ENCODE measurements at regions of chr2 and their contacts with region 1.

Region 1: GRCh38 chr2:128321784-128322714 is 3.4 kb upstream of the HS6ST1 start:
- DNase-seq: peak; percentile 76 to 91 (median 87)
- H3K4me3 ChIP-seq: peak overlapping the region; percentile 42 to 81 (median 66)
- H3K27ac ChIP-seq: peak overlapping the region in 54 of 59 donors; percentile 9 to 92 (median 74)
- H3K27me3 ChIP-seq: no peaks in the 10 kb centered on the region
- CTCF ChIP-seq: peak; percentile 74 to 100 (median 97)

Region 2: DNA sequence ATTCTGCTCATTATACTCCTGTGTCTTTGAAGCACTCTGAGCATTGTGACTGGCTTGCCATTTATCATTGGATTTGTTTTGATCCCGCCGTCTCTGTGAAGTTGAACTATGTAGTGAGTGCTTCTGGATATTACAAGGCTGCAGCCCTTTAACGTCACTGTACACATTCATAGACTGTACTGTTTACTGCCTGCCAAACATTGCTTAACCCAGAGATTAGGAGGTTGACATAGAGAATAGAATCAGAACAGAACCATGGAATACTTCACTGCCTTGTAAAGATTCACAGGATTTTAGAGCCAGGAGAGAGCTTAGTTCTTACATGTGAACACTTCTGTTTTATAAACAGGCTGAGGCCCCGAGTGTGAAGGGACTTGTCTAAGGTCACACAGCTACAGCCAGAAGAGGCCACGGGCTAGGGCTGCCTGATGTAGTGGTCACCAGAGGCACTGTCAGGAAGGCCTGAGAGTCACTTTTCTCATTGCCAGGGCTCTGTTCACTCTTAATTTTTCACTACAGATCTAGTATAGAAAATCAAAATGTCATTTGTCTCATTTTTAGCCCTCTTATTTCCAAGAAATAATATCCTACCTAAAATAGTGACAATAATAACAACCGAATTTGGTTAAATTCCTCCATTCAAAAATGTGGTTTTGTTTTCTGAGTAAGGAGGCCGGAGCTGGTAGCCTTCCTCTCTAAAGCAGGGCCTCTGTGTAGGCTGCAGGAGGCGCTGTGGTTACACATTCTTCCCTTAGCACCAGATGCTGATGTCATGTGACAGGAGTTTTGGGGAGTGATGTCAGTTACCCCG is 143.2 kb before region 1 on chr2:
- intact Hi-C with region 1: loop called (anchors 5 kb)
- DNase-seq: peak; percentile 38 to 79 (median 70)
- H3K4me3 ChIP-seq: peak overlapping the region in 5 of 59 donors; percentile 1 to 44 (median 14)
- H3K27ac ChIP-seq: peak overlapping the region in 11 of 59 donors; percentile 1 to 57 (median 47)
- H3K27me3 ChIP-seq: no peaks in the 10 kb centered on the region
- CTCF ChIP-seq: peak; percentile 53 to 97 (median 84)

Region 3: GRCh38 chr2:128644718-128645256 is 322.7 kb after region 1 on chr2:
- intact Hi-C with region 1: loop called in 1 of 2 experiments (anchors 10 kb)
- DNase-seq: peak in 2 of 10 donors; percentile 1 to 20
- H3K4me3 ChIP-seq: no peak overlapping the region
- H3K27ac ChIP-seq: no peak overlapping the region
- H3K27me3 ChIP-seq: no peaks in the 10 kb centered on the region
- CTCF ChIP-seq: no peak

Region 4: DNA sequence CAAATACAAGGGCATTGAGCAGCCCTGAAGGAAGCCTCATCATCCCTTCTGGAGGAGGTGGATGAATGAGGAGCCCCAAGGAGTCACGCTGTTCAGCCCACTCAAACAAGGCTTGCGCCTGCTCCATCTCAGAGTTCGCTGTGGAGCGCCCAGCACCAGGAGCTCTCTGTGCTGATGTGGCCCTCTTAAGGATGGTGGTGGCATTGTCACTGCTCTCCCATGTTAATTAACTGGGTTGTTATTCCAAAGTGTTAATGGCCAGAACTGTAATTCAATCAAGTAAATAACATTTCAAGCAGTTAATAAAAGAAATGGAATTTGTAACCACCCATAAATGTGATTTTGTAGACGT is 931.4 kb after region 1 on chr2:
- intact Hi-C with region 1: loop called in 1 of 2 experiments (anchors 10 kb)
- DNase-seq: peak in 7 of 10 donors; percentile 11 to 74 (median 58)
- H3K4me3 ChIP-seq: no peak overlapping the region
- H3K27ac ChIP-seq: peak overlapping the region in 2 of 59 donors; percentile 11 to 43
- H3K27me3 ChIP-seq: no peaks in the 10 kb centered on the region
- CTCF ChIP-seq: peak in 52 of 56 donors; percentile 15 to 60 (median 40)

Region 5: DNA sequence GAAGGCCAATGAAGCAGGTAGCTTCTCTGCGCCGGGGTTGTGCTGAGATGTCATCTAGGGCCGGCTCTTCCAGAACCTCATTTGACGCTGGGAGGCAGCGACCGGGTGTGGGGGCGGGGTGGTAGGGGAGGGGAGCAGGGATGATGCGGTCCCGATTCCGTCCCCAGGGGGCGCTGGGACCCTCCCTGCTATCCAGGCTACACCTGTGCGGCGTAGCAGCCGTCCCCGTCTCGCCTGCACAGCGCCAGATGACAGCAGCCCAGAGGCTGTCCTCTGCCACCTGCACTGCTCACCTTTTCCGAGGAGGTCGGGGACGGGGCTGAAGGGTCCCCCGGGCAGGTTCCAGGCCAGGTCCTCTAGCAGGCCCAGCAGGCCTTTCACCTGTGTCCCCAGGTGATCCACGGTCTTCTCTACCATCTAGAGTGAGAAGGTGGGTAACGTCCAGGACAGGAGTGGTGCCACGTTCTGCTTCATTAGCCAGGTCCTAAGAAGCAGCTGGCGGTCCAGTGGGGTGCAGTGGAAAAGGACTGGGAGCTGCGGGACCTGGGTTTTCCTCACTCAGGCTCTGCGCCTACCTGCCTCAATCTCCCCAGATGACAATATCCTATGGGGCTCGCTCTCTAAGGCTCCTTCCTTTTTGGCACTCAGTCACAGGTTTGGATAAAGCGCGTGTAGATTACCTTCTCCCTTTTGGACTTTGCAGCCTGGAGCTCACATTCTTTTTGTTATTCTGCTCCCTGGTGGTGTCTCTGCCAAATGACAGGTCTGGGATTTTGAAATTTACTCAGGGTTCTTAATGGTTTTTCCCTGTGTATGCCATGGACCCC is 1601.4 kb after region 1 on chr2:
- intact Hi-C with region 1: loop called in 1 of 2 experiments (anchors 5 kb)
- DNase-seq: peak in 1 of 10 donors; percentile 60
- H3K4me3 ChIP-seq: peak overlapping the region; percentile 11 to 65 (median 44)
- H3K27ac ChIP-seq: peak overlapping the region in 7 of 59 donors; percentile 6 to 68 (median 36)
- H3K27me3 ChIP-seq: peaks cover 0 to 12% (median 0%) of the 10 kb centered on the region in 45 donors
- CTCF ChIP-seq: peak; percentile 39 to 78 (median 62)

Measured in dorsolateral prefrontal cortex (tissue), 120 donors.